ENCODE measurements at regions of chr18 and their contacts with region 1.

Region 1: GRCh38 chr18:58321986-58322385 is 278.0 kb downstream of the NEDD4L start:
- DNase-seq: peak; percentile 87
- H3K4me3 ChIP-seq: no peak overlapping the region
- H3K27ac ChIP-seq: peak overlapping the region; percentile 48 to 51
- H3K4me1 ChIP-seq: peaks cover 6% of the 10 kb centered on the region
- H3K27me3 ChIP-seq: no peaks in the 10 kb centered on the region
- CTCF ChIP-seq: peak in 3 of 4 experiments; percentile 54 to 75 (median 62)
- POLR2A ChIP-seq: no peak

Region 2: DNA sequence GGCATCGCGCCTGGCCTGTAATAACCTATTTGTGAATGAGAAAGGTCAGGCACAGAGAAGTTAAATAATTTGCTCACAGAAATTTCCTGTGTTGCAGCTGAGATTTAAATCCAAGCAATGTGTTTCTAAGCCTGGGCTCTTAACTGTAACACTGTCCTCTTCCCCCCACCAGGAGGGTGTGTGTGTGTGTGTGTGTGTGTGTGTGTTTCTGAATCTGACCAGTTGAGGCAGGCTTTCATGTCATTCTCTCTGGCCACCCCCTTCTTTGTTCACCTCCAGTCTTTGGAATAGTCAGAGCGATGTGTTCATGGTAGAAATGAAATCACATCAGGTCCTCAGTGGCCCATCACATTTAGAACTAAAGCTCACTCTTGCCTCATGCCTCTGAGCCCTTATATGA is 196.8 kb before region 1 on chr18:
- intact Hi-C with region 1: no loop called
- DNase-seq: no peak
- H3K4me3 ChIP-seq: no peak overlapping the region
- H3K27ac ChIP-seq: no peak overlapping the region
- H3K4me1 ChIP-seq: no peaks in the 10 kb centered on the region
- H3K27me3 ChIP-seq: no peaks in the 10 kb centered on the region
- CTCF ChIP-seq: no peak
- POLR2A ChIP-seq: no peak

Region 3: DNA sequence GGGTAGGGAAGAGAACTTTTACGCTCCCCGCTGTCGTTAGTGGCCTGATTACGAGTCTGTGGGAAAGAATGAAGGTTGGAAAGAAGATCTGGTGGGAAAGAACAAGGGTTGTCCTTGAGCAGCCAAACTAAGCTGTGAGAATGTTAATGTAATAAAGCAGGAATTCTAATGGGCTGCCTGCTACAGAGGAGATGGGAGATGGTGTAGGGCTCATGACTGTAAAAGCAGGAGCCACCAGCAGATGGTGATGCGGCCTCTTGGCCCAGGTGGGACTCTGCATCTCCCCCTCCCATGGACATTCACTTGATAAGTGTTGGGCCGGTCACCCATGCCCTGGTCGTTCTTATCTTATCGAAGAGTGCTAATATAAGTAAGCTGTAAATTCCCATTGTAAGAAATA is 128.0 kb before region 1 on chr18:
- intact Hi-C with region 1: loop called (anchors 5 kb)
- DNase-seq: no peak
- H3K4me3 ChIP-seq: no peak overlapping the region
- H3K27ac ChIP-seq: peak overlapping the region in 1 of 2 donors; percentile 64
- H3K4me1 ChIP-seq: peaks cover 4% of the 10 kb centered on the region
- H3K27me3 ChIP-seq: no peaks in the 10 kb centered on the region
- CTCF ChIP-seq: peak in 1 of 4 experiments; percentile 31
- POLR2A ChIP-seq: no peak